Panc1 (cell line): ENCODE measurements at regions of chr3 and their contacts with region 1.

Region 1: DNA sequence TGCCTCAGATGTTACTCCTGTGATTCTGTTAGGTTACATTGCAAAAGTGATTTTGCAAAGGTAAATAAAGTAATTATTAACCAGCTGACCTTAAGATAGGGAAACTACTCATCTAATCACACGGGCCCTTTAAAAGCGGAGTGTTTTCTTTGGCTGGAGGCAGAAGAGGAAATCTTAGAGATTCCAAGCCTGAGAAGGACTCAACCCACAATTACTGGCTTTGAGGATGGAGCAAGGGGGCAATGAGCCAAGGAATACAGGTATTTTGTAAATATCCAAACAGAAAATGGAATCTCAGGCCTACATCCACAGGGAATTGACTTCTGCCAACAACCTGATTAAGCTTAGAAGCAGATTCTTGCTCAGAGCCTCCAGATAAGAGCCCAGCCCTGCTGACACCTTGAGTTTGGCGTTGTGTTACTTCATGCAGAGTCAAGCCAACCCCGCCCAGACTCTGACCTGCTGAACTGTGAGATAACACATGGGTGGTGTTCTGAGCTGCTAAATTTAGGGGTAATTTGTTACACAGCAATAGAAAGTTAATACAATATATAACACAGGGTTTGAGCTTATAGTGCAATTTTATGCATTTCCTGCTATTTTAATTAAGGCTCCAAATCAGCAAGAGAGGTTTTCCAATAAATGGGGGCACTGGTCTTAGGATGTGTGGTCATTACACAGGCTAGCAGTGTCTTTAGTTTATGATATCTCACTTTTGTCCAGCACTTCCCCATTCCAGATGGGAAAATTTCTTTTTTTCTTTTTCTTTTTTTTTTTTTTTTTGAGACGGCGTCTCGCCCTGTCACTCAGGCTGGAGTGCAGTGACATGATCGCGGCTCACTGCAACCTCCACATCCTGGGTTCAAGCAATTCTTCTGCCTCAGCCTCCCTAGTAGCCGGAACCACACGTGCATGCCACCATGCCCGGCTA is 19.5 kb downstream of the NFKBIZ start:
- DNase-seq: no peak
- ATAC-seq: peak; percentile 53; the same call in 1 of the 2 replicates
- H3K4me3 ChIP-seq: no peak overlapping the region
- H3K27ac ChIP-seq: no peak overlapping the region
- H3K4me1 ChIP-seq: peaks cover 8% of the 10 kb centered on the region; the same call in 1 of the 2 replicates
- H3K27me3 ChIP-seq: no peaks in the 10 kb centered on the region
- CTCF ChIP-seq: no peak

Region 2: GRCh38 chr3:101501783-101502182 is 367.0 kb before region 1 on chr3:
- CTCF ChIA-PET with region 1: no interaction called
- POLR2A ChIA-PET with region 1: no interaction called
- in situ Hi-C with region 1: no loop called
- intact Hi-C with region 1: no loop called
- DNase-seq: no peak
- ATAC-seq: no peak
- H3K4me3 ChIP-seq: no peak overlapping the region
- H3K27ac ChIP-seq: no peak overlapping the region
- H3K4me1 ChIP-seq: no peaks in the 10 kb centered on the region
- H3K27me3 ChIP-seq: no peaks in the 10 kb centered on the region
- CTCF ChIP-seq: no peak

Region 3: DNA sequence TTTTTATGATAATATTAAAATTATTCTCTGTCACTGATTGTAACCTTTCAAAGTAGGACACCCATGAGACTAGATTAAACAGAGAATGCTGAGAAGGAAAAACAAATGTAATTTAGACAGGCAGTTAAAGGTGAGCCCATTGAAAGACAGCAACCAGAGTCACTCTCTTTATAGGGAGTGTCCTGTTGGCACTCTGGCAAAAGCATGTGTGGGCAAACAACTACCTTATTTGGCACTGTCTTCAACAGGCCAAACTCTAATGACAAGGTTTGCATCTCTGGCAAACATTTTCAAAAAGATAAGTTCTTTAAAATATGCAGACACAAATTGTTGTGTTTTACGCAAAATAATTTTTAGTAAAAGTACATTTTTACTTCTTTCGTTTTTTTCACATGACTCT is 10.3 kb after region 1 on chr3:
- CTCF ChIA-PET with region 1: no interaction called
- POLR2A ChIA-PET with region 1: no interaction called
- in situ Hi-C with region 1: no loop called
- intact Hi-C with region 1: no loop called
- DNase-seq: no peak
- ATAC-seq: no peak
- H3K4me3 ChIP-seq: no peak overlapping the region
- H3K27ac ChIP-seq: no peak overlapping the region
- H3K4me1 ChIP-seq: no peaks in the 10 kb centered on the region
- H3K27me3 ChIP-seq: no peaks in the 10 kb centered on the region
- CTCF ChIP-seq: no peak

Region 4: GRCh38 chr3:101928890-101929289 is 60.1 kb after region 1 on chr3:
- CTCF ChIA-PET with region 1: interaction called, 12 read pairs
- POLR2A ChIA-PET with region 1: no interaction called
- in situ Hi-C with region 1: no loop called
- intact Hi-C with region 1: no loop called
- DNase-seq: peak; percentile 65
- ATAC-seq: peak; percentile 64
- H3K4me3 ChIP-seq: no peak overlapping the region
- H3K27ac ChIP-seq: no peak overlapping the region
- H3K4me1 ChIP-seq: 0 out of 2 replicates have a peak, but pooled peaks cover 4% of the 10 kb centered on the region
- H3K27me3 ChIP-seq: no peaks in the 10 kb centered on the region
- CTCF ChIP-seq: no peak

Region 5: GRCh38 chr3:102078854-102079253 is 210.1 kb after region 1 on chr3:
- CTCF ChIA-PET with region 1: no interaction called
- POLR2A ChIA-PET with region 1: no interaction called
- in situ Hi-C with region 1: no loop called
- intact Hi-C with region 1: no loop called
- DNase-seq: no peak
- ATAC-seq: no peak
- H3K4me3 ChIP-seq: no peak overlapping the region
- H3K27ac ChIP-seq: no peak overlapping the region
- H3K4me1 ChIP-seq: no peaks in the 10 kb centered on the region
- H3K27me3 ChIP-seq: no peaks in the 10 kb centered on the region
- CTCF ChIP-seq: no peak